ENCODE measurements at regions of chr15 and their contacts with region 1.

Region 1: GRCh38 chr15:30903497-30904201 is at the start of gene FAN1:
- DNase-seq: peak; percentile 89
- ATAC-seq: peak; percentile 94
- H3K4me3 Mint-ChIP-seq: peak within 1 kb of the TSS; percentile 95
- H3K27ac Mint-ChIP-seq: peak within 1 kb of the TSS; percentile 89
- H3K4me1 Mint-ChIP-seq: peaks cover 23% of the 10 kb centered on the region
- H3K27me3 Mint-ChIP-seq: peaks cover 3% of the 10 kb centered on the region
- total RNA-seq, gene FAN1: 11.6 to 15.4 TPM

Region 2: DNA sequence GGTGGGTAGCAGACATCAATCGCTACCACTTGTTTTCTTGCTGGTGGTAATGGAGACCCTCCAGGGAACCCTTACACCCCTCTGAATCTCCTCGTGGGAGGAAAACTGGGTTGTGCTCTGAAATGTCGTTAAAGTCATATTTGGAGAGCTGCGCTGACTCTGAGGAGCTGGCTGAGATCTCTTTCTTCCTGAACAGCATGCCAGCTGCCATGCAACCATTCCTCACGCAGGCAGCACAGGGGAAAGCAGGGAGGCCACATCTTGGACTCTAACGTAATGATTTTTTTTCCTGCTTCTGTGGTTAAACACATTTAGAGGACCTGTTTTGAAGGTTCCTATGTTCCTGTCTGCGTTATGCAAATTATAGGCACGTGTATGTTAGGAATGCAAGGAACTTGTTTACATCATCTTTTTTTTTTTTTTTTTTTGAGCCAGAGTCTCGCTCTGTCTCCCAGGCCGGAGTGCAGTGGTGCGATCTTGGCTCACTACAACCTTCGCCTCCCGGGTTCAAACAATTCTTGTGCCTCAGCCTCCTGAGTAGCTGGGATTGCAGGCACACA is 1238.1 kb before region 1 on chr15:
- CTCF ChIA-PET with region 1: no interaction called
- POLR2A ChIA-PET with region 1: no interaction called
- intact Hi-C with region 1: no loop called
- DNase-seq: no peak
- ATAC-seq: no peak
- H3K4me3 Mint-ChIP-seq: no peak overlapping the region
- H3K27ac Mint-ChIP-seq: no peak overlapping the region
- H3K4me1 Mint-ChIP-seq: no peaks in the 10 kb centered on the region
- H3K27me3 Mint-ChIP-seq: peaks cover 8% of the 10 kb centered on the region

Region 3: DNA sequence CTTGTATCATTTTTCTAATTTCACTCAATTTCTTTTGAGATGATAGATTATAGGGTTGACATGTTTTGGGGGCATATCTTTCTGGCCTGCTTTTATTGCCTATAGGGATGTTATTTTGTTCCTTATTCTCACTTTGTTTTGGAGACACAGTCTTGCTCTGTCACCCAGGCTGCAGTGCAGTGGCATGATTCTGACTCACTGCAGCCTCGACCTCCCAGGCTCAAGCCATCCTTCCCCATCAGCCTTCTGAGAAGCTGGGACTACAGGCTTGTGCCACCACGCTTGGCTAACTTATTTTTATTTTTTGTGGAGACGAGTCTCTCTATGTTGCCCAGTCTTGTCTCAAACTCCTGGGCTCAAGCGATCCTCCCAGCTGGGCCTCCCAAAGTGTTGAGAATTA is 72.7 kb before region 1 on chr15:
- CTCF ChIA-PET with region 1: no interaction called
- POLR2A ChIA-PET with region 1: no interaction called
- intact Hi-C with region 1: loop called in 1 of 2 experiments (anchors 5 kb)
- DNase-seq: no peak
- ATAC-seq: no peak
- H3K4me3 Mint-ChIP-seq: no peak overlapping the region
- H3K27ac Mint-ChIP-seq: no peak overlapping the region
- H3K4me1 Mint-ChIP-seq: peaks cover 20% of the 10 kb centered on the region
- H3K27me3 Mint-ChIP-seq: no peaks in the 10 kb centered on the region

Region 4: GRCh38 chr15:30859091-30859874 is 44.4 kb before region 1 on chr15:
- CTCF ChIA-PET with region 1: interaction called, 12 read pairs
- POLR2A ChIA-PET with region 1: no interaction called
- intact Hi-C with region 1: no loop called
- DNase-seq: peak; percentile 26
- ATAC-seq: no peak
- H3K4me3 Mint-ChIP-seq: no peak overlapping the region
- H3K27ac Mint-ChIP-seq: no peak overlapping the region
- H3K4me1 Mint-ChIP-seq: peaks cover 3% of the 10 kb centered on the region
- H3K27me3 Mint-ChIP-seq: no peaks in the 10 kb centered on the region

Region 5: GRCh38 chr15:30991255-30992072 is 87.8 kb after region 1 on chr15 and contains the start of gene MTMR10:
- CTCF ChIA-PET with region 1: no interaction called
- POLR2A ChIA-PET with region 1: no interaction called
- intact Hi-C with region 1: loop called in 1 of 2 experiments (anchors 1 kb)
- DNase-seq: peak; percentile 80
- ATAC-seq: peak; percentile 93
- H3K4me3 Mint-ChIP-seq: peak within 1 kb of the TSS; percentile 95
- H3K27ac Mint-ChIP-seq: peak within 1 kb of the TSS; percentile 84
- H3K4me1 Mint-ChIP-seq: peaks cover 27% of the 10 kb centered on the region
- H3K27me3 Mint-ChIP-seq: peaks cover 1% of the 10 kb centered on the region
- total RNA-seq, gene MTMR10: 10.1 to 17.6 TPM